ENCODE measurements at regions of chr12 and their contacts with region 1.

Region 1: GRCh38 chr12:43805860-43806736 is at the start of gene TWF1:
- DNase-seq: no peak
- ATAC-seq: peak; percentile 95
- H3K4me3 ChIP-seq: peak within 1 kb of the TSS; percentile 84
- H3K27ac ChIP-seq: peak within 1 kb of the TSS; percentile 96
- H3K4me1 ChIP-seq: no peaks in the 10 kb centered on the region
- H3K27me3 ChIP-seq: no peaks in the 10 kb centered on the region
- CTCF ChIP-seq: peak in 2 of 3 experiments; percentile 18 to 30; a peak in 2 of 6 replicates
- EP300 ChIP-seq: peak in 1 of 2 experiments; percentile 9; a peak in 1 of 4 replicates
- POLR2A ChIP-seq: peak; percentile 95
- RAD21 ChIP-seq: no peak
- polyA plus RNA-seq, gene TWF1: 8.7 to 11.5 TPM

Region 2: GRCh38 chr12:43758728-43759563 is 47.2 kb before region 1 on chr12 and contains the starts of genes IRAK4 and PUS7L:
- CTCF ChIA-PET with region 1: interaction called, 21 read pairs
- POLR2A ChIA-PET with region 1: interaction called, 24 read pairs
- RAD21 ChIA-PET with region 1: interaction called, 17 read pairs
- SMC1A ChIA-PET with region 1: interaction called, 12 read pairs
- in situ Hi-C with region 1: no loop called
- intact Hi-C with region 1: no loop called
- DNase-seq: peak; percentile 87
- ATAC-seq: peak; percentile 92
- H3K4me3 ChIP-seq: peak within 1 kb of the TSS; percentile 84
- H3K27ac ChIP-seq: peak within 1 kb of the TSS; percentile 96
- H3K4me1 ChIP-seq: 0 out of 2 replicates have a peak, but pooled peaks cover 4% of the 10 kb centered on the region
- H3K27me3 ChIP-seq: no peaks in the 10 kb centered on the region
- CTCF ChIP-seq: peak; percentile 39 to 77 (median 56); a peak in 5 of 6 replicates
- EP300 ChIP-seq: no peak
- POLR2A ChIP-seq: peak; percentile 93
- RAD21 ChIP-seq: peak; percentile 43; the same call in 1 of the 2 replicates
- polyA plus RNA-seq, gene IRAK4: 7.9 to 13.8 TPM
- polyA plus RNA-seq, gene PUS7L: 9.2 to 42.1 TPM